Activated T-helper 1 cell treated with anti-CD3 and anti-CD28 coated beads, Interleukin-12 subunit alpha, Interleukin-12 subunit beta, Interleukin-2, Interleukin-4 antibody, amounts not matched to agents 30 ng/mL and 10 ng/mL and 1 ng/mL, durations not matched to agents 14 hours and 24 hours and 36 hours (primary cell): ENCODE measurements at regions of chr12 and their contacts with region 1.

Region 1: DNA sequence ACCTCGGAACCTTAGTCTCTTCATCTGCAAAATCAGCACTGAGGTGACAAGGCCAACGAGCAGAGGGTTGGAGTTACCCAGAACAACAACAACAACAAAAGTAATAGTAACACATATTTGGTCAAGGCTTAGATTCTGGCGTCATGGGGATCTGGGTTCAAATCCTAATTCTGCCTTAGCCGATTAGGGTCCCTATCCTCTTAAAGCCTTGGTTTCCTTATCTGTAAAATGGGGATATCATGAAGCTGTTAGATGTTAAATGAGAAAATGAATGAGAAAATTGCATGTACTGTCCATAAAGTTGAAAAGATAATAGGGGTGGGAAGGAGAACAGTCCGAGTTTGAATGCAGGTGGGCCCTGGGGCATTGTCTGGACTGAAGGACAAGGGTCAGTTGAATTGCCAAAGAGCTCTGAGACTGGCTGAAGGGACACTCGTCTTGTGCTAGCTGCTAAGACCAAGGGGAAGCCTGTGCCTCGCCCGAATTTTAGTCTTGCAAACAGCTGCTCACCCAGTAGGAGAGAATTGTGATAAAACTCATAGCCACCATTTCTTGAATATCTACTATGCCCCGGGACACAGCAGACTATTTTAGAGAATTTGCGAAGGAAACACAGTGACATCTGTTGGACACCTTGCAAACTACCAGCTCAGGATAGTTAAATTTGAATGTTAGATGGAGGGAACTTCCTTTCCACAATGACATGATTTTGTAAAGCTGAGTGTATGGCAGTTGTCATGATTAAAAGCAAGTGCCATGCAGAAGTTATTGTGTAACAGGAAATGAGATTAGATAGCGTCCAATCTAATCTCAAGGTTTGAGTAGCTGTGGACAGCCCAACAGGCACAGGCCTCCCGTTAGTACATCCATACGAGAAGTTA is 6.8 kb upstream of the HNF1A start:
- DNase-seq: peak; percentile 17
- H3K4me3 Mint-ChIP-seq: no peak overlapping the region
- H3K27ac Mint-ChIP-seq: no peak overlapping the region
- H3K4me1 Mint-ChIP-seq: peaks cover 7% of the 10 kb centered on the region
- H3K27me3 Mint-ChIP-seq: peaks cover 8% of the 10 kb centered on the region

Region 2: GRCh38 chr12:120649442-120650232 is 321.9 kb before region 1 on chr12:
- intact Hi-C with region 1: loop called (anchors 1 kb)
- DNase-seq: no peak
- H3K4me3 Mint-ChIP-seq: no peak overlapping the region
- H3K27ac Mint-ChIP-seq: no peak overlapping the region
- H3K4me1 Mint-ChIP-seq: peaks cover 15% of the 10 kb centered on the region
- H3K27me3 Mint-ChIP-seq: peaks cover 54% of the 10 kb centered on the region

Region 3: DNA sequence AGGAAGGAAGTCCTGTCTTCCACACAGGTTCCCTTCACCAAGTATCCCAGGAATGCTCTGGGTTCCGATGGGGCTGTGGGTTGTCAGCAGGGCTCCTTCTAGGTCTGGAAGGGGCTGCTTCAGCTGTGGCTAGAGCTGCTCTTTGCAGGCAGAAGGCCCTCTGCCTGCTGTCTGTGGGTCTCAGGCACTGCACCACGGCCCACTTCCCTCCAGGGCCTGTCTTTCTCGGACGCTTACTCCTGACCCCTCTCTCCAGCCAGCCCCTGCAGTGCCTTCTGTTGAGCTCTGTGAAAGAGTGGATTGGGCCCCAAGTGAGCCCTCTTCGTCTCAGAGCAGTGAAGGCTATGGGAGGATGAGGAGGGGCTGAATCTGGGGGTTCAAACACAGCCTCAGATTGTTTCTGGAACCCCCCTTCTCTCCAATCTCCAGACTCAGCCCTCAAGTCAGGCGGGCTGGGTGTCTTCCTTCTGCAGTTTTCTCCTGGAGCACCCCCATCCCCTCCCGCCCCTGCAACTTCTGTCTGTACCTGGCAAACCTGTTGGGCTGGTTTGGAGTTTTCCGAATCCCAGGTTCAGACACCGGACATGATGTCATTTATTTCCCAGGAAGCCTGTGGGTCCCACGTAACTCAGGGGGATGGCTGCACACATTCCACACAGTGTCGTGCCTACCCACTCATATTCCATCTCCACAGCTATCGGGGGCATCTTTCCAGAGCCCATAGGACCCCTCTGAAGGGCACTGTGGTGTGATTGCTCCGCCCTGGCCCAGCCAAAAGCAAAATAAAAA is 42.5 kb before region 1 on chr12:
- intact Hi-C with region 1: no loop called
- DNase-seq: no peak
- H3K4me3 Mint-ChIP-seq: no peak overlapping the region
- H3K27ac Mint-ChIP-seq: no peak overlapping the region
- H3K4me1 Mint-ChIP-seq: no peaks in the 10 kb centered on the region
- H3K27me3 Mint-ChIP-seq: no peaks in the 10 kb centered on the region

Region 4: GRCh38 chr12:120944645-120945231 is 26.8 kb before region 1 on chr12:
- intact Hi-C with region 1: loop called (anchors 1 kb)
- DNase-seq: peak; percentile 46
- H3K4me3 Mint-ChIP-seq: no peak overlapping the region
- H3K27ac Mint-ChIP-seq: no peak overlapping the region
- H3K4me1 Mint-ChIP-seq: peaks cover 5% of the 10 kb centered on the region
- H3K27me3 Mint-ChIP-seq: peaks cover 4% of the 10 kb centered on the region

Region 5: GRCh38 chr12:121610239-121611149 is 639.0 kb after region 1 on chr12:
- intact Hi-C with region 1: no loop called
- DNase-seq: no peak
- H3K4me3 Mint-ChIP-seq: no peak overlapping the region
- H3K27ac Mint-ChIP-seq: no peak overlapping the region
- H3K4me1 Mint-ChIP-seq: peaks cover 5% of the 10 kb centered on the region
- H3K27me3 Mint-ChIP-seq: peaks cover 4% of the 10 kb centered on the region